ENCODE measurements at regions of chr9 and their contacts with region 1.

Region 1: GRCh38 chr9:129720181-129720864 is 32.5 kb downstream of the PTGES start:
- DNase-seq: no peak
- ATAC-seq: no peak
- H3K4me3 ChIP-seq: no peak overlapping the region
- H3K27ac ChIP-seq: no peak overlapping the region
- H3K4me1 ChIP-seq: no peaks in the 10 kb centered on the region
- H3K27me3 ChIP-seq: no peaks in the 10 kb centered on the region

Region 2: GRCh38 chr9:129641746-129642513 is 78.4 kb before region 1 on chr9 and contains the start of gene ASB6:
- intact Hi-C with region 1: loop called (anchors 5 kb)
- DNase-seq: peak; percentile 98 to 100
- ATAC-seq: peak; percentile 98
- H3K4me3 ChIP-seq: peak within 1 kb of the TSS; percentile 70 to 86
- H3K27ac ChIP-seq: peak within 1 kb of the TSS in 1 of 2 donors; percentile 23
- H3K4me1 ChIP-seq: no peaks in the 10 kb centered on the region
- H3K27me3 ChIP-seq: no peaks in the 10 kb centered on the region
- total RNA-seq, gene ASB6: 15.8 to 20.8 TPM

Region 3: DNA sequence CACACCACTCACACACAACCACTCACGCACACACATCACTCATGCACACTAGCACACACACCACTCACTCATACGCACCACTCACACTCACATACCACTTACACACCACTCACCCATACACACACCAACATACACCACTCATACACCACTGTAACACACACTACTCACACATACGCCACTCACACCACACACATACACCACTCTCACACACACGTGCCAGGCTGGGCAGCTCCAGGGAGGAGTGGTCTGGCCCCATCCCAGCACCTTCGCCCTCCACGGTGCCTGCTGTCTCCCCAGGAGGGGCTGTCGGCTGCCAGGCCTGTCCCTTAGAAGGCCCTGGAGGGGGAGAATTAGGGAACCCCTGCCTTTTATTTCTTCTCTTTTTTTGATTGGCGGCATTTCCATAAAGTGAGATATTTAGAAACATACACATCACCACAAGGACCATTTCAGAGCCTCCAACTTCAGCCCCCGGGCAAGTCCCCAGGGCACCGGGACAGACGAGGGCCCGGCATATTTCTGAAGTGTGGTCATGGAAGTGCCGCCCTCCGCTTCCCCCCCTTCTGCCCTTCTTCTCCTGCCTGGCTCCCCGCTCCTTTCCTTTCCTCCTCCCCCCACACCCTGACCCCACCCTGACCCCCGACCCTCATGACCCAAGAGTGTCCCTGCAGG is 72.1 kb before region 1 on chr9:
- intact Hi-C with region 1: loop called (anchors 5 kb)
- DNase-seq: peak; percentile 75 to 91
- ATAC-seq: peak; percentile 80
- H3K4me3 ChIP-seq: no peak overlapping the region
- H3K27ac ChIP-seq: peak overlapping the region; percentile 2 to 55
- H3K4me1 ChIP-seq: no peaks in the 10 kb centered on the region
- H3K27me3 ChIP-seq: no peaks in the 10 kb centered on the region

Measured in aorta (tissue), 5 donors.